ENCODE measurements at regions of chr2 and their contacts with region 1.

Region 1: DNA sequence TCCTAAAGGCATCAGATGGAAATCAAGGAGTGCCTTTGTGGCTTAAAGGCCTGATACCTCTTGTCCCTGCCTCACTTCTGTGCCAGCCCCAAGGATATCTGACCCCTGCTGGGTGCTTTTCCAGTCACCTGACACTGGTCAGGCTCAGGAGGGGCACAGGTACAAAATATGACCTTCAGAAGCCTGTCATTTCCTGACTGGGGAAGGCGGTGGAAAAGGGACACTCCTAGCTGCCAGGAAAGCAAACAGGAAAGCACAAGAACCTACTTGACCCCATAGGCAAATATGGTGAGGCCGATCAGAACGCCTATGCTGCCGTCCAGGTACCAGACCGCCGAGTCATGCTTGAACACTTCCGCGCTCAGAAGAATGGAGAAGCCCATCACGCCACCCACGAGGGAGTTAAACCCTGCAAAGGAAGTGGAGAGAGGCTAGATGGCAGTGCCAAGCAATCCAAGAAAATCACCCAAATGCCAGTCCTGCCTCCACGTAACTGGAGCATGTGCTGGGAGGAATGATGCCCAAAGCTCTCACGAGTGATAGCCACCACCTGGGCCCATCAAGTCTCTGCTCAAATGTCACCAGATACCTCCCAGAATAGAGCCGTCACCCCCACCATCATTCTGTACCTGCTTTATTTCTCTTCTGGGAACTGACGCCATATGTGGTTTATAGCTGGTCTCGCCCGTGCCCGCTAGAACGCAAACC is 204.0 kb downstream of the MGAT5 start:
- DNase-seq: no peak
- H3K4me3 ChIP-seq: no peak overlapping the region
- H3K27ac ChIP-seq: no peak overlapping the region
- H3K4me1 ChIP-seq: no peaks in the 10 kb centered on the region
- H3K27me3 ChIP-seq: no peaks in the 10 kb centered on the region
- CTCF ChIP-seq: no peak

Region 2: GRCh38 chr2:134918526-134919340 is 460.8 kb after region 1 on chr2 and contains the start of gene CCNT2:
- intact Hi-C with region 1: loop called (anchors 10 kb)
- DNase-seq: peak; percentile 100
- H3K4me3 ChIP-seq: peak within 1 kb of the TSS; percentile 89
- H3K27ac ChIP-seq: peak within 1 kb of the TSS; percentile 97
- H3K4me1 ChIP-seq: peaks cover 5% of the 10 kb centered on the region
- H3K27me3 ChIP-seq: no peaks in the 10 kb centered on the region
- CTCF ChIP-seq: no peak
- total RNA-seq, gene CCNT2: 26.3 to 38.7 TPM

Measured in colonic mucosa (tissue), 4 donors.